A673 (cell line): ENCODE measurements at regions of chr3 and their contacts with region 1.

Region 1: DNA sequence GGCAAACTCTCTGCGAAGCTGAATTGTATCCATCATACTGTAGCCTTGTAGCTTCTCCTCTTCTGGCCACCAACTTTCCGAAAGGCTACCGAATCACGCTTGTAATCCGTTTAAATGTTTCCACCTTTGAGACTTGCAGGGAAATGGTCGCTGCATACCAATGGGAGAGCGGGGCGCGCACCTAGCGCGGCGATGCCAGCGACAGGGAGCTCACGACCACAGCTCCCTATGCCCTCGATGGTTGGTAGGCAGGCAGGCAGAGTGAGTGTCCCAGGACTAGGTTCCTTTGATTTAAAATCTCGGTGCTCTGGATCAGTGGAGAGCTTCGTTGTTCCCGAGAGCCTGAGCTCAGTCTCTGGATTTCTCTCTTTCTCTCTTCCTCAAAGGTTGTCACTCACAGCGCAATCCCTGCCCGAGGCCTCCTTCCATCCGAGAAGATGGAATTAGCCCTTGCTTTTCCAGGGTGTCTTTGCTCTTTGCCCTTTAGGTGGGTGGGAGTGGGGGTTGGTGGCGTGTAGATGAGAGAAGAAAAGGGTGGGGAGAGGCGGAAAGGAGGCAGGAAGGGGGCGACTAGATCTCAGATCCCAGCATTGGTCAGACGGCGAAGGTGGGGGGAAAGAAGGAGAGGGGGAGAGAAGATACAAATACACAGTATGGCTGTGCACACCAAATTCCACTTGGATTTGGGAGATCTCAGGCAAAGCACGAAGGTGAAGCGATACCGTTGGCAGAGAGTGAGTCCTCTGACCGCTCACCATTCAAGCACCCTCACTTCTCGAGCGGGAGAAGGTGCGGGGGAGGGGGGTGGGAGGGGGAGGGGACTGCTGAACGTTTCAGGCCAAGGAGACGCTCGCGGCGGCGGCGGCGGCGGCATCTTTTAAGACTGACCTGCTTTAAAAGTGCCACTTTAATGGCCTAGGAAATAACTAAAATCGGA is at the start of gene SLITRK3:
- DNase-seq: peak; percentile 35
- H3K4me3 ChIP-seq: peak within 1 kb of the TSS; percentile 66
- H3K27ac ChIP-seq: peak within 1 kb of the TSS; percentile 51
- H3K4me1 ChIP-seq: no peaks in the 10 kb centered on the region
- H3K27me3 ChIP-seq: no peaks in the 10 kb centered on the region
- CTCF ChIP-seq: no peak
- total RNA-seq, gene SLITRK3: 5.2 and 5.4 TPM in 2 replicates

Region 2: DNA sequence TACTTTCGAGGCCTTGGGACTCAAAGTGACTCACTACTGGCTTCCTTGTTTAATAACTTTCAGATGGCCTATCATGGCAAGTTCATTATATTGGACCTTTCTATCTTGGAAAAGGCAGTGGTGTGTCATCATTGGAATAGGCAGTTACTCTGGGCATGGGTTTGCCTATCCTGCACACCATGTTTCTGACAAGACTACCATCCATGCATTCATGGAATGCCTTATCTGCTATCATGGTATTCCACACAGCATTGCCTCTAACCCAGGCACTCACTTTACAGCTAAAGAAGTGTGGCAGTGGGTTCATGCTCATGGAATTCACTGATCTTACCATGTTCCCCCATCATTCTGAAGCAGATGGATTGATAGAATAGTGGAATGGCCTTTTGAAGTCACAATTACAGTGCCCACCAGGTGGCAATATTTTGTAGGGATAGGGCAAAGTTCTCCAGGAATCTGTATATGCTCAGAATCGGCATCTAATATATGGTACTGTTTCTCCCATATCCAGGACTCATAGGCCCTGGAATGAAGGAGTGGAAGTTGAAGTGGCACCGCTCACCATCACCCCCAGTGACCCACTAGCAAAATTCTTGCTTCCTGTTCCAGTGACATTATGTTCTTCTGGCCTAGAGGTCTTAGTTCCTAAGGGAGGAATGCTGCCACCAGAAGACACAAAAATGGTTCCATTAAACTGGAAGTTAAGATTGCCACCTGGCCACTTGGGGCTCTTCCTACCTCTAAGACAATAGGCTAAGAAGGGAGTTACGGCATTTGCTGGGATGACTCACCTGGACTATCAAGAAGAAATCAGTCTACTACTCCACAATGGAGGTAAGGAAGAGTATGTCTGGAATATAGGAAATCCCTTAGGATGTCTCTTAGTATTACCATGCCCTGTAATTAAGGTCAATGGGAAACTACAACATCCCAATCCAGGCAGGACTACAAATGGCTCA is 1279.0 kb before region 1 on chr3:
- CTCF ChIA-PET with region 1: no interaction called
- POLR2A ChIA-PET with region 1: no interaction called
- intact Hi-C with region 1: loop called (anchors 5 kb)
- DNase-seq: peak; percentile 52
- H3K4me3 ChIP-seq: no peak overlapping the region
- H3K27ac ChIP-seq: no peak overlapping the region
- H3K4me1 ChIP-seq: no peaks in the 10 kb centered on the region
- H3K27me3 ChIP-seq: no peaks in the 10 kb centered on the region
- CTCF ChIP-seq: peak; percentile 62

Region 3: DNA sequence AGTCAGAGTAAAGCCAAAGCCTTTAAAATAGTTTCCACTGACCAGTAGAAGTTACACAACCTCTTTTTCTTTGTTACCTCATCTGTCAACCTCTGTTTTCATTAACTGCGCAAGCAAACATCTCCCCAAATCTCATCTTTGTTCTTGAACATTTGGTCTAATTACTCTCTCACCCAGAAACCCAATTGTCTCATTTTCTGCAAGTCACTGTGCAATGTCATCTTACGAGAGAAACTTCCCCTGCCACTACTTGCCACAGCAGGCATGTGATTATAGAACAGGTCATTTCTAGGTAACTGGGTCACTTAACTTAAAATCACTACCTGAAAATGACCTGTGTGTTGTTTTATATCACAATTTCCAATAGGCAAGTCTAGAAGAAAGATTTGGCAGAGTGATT is 277.0 kb before region 1 on chr3:
- CTCF ChIA-PET with region 1: no interaction called
- POLR2A ChIA-PET with region 1: no interaction called
- intact Hi-C with region 1: no loop called
- DNase-seq: no peak
- H3K4me3 ChIP-seq: no peak overlapping the region
- H3K27ac ChIP-seq: no peak overlapping the region
- H3K4me1 ChIP-seq: no peaks in the 10 kb centered on the region
- H3K27me3 ChIP-seq: no peaks in the 10 kb centered on the region
- CTCF ChIP-seq: no peak

Region 4: DNA sequence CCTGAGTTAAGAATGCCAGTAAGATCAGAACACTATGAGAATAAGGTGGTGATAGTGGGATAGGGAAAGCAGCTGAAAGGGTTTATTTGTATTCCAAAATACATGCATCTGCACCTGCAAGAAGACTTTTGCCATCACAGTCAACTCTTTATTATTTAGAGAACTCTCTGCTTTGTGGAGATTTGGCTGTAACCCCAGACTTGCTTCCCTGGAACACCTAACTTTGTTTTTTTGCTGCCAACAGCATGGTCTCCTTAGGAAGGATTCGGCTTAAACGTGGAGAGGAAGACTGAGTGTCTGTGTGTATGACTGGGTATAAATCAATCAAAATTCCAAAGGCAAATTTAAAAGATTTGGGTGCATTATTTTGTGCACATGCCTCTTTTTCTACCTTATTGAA is 21.8 kb after region 1 on chr3:
- CTCF ChIA-PET with region 1: no interaction called
- POLR2A ChIA-PET with region 1: no interaction called
- intact Hi-C with region 1: no loop called
- DNase-seq: no peak
- H3K4me3 ChIP-seq: no peak overlapping the region
- H3K27ac ChIP-seq: no peak overlapping the region
- H3K4me1 ChIP-seq: no peaks in the 10 kb centered on the region
- H3K27me3 ChIP-seq: no peaks in the 10 kb centered on the region
- CTCF ChIP-seq: no peak